Endothelial cell of umbilical vein (primary cell): ENCODE measurements at regions of chr1 and their contacts with region 1.

Region 1: DNA sequence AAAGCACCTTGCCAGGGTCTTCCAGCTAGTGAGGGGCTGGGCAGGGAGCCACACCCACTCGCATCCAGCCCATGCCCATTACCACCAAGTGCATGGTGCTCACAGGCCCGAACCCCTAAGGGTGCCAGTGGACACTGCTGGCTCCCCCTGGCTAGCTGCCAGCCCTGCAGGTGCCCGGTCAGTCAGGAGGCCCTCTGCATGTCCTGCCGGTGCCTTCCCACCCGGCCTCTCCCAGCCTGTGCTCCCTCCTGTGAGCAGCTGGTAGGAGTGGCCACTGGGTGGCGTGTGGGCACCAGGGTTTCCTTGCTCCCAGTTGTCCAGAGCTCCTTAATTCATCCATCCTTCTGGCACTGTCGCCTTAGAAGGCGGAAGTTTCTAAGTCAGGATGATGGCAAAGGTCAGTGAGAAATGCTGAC is 33.4 kb downstream of the QSOX1 start:
- DNase-seq: peak; percentile 44
- H3K4me3 ChIP-seq: no peak overlapping the region
- H3K27ac ChIP-seq: no peak overlapping the region
- H3K4me1 ChIP-seq: no peaks in the 10 kb centered on the region
- H3K27me3 ChIP-seq: no peaks in the 10 kb centered on the region
- CTCF ChIP-seq: peak; percentile 67 to 80
- POLR2A ChIP-seq: no peak

Region 2: DNA sequence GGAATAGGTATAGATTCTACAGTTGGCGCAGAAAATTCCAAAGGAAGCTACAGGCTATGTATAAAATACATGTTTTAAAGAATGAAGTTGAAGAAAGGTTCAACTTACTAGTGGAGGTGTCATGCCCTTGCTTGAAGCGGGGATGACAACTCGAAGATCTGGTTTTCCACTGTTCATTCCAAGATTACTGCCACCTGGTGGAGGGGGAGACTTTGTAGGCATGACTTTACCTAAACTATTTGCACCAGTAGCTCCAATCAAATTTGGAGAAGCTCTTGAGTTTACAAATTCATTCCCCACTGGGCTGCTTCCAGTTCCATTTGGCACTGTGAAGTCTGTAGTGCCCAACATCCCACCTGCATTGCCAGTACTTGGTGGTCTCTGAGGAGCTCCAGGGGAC is 740.6 kb before region 1 on chr1:
- CTCF ChIA-PET with region 1: no interaction called
- POLR2A ChIA-PET with region 1: no interaction called
- dilution Hi-C with region 1: no loop called
- intact Hi-C with region 1: no loop called
- DNase-seq: peak; percentile 4
- H3K4me3 ChIP-seq: no peak overlapping the region
- H3K27ac ChIP-seq: no peak overlapping the region
- H3K4me1 ChIP-seq: no peaks in the 10 kb centered on the region
- H3K27me3 ChIP-seq: no peaks in the 10 kb centered on the region
- CTCF ChIP-seq: peak in 1 of 2 donors; percentile 28
- POLR2A ChIP-seq: no peak

Region 3: GRCh38 chr1:180201451-180202200 is 13.5 kb after region 1 on chr1:
- CTCF ChIA-PET with region 1: interaction called, 20 read pairs
- POLR2A ChIA-PET with region 1: no interaction called
- dilution Hi-C with region 1: no loop called
- intact Hi-C with region 1: no loop called
- DNase-seq: no peak
- H3K4me3 ChIP-seq: no peak overlapping the region
- H3K27ac ChIP-seq: no peak overlapping the region
- H3K4me1 ChIP-seq: no peaks in the 10 kb centered on the region
- H3K27me3 ChIP-seq: no peaks in the 10 kb centered on the region
- CTCF ChIP-seq: no peak
- POLR2A ChIP-seq: no peak

Region 4: GRCh38 chr1:180482425-180483275 is 294.6 kb after region 1 on chr1:
- CTCF ChIA-PET with region 1: interaction called, 38 read pairs
- POLR2A ChIA-PET with region 1: no interaction called
- dilution Hi-C with region 1: no loop called
- intact Hi-C with region 1: loop called (anchors 1 kb)
- DNase-seq: peak; percentile 71
- H3K4me3 ChIP-seq: no peak overlapping the region
- H3K27ac ChIP-seq: no peak overlapping the region
- H3K4me1 ChIP-seq: peaks cover 5% of the 10 kb centered on the region
- H3K27me3 ChIP-seq: no peaks in the 10 kb centered on the region
- CTCF ChIP-seq: peak; percentile 50 to 60
- POLR2A ChIP-seq: no peak